GM12878 (cell line): ENCODE measurements at regions of chr2 and their contacts with region 1.

Region 1: DNA sequence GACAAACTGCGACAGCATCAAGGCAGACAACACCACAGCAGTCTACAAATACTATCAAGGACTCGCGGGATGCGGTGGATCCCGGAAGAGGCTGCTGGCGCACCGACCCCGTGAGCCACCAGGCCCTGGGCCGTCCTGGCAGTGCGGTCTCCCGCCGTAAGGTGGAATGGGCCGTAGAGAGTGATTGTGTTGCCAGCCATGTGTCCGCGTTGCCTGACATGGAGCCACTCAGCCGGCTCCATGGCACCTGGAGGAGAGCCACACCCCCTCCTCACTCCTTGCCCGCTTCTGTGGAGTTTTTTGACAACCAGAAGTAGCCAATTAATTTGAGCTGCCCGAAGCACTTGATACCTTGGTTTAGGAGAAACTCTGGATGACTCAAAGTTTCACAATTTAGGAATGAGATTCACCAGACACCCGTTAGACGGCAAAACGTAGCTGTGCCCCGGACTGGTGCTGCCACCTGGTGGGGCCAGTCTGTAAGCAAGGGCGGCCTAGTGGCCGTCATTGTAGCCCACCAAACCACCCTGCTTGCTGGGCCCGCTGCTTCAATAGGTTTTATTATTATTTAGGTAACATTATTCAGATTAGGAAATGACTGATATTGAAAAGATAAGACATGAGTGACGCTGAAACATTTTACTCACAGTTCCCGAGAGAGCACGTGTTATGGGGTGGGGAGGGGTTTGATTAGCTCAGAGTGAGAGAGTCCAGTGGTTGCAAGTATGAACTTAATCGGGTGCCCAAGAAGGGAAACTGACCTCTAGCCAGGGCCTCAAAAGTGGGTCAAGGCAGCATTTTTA is 10.2 kb upstream of the IMP4 start:
- DNase-seq: no peak
- ATAC-seq: peak; percentile 84
- H3K4me3 ChIP-seq: no peak overlapping the region
- H3K27ac ChIP-seq: no peak overlapping the region
- H3K4me1 ChIP-seq: no peaks in the 10 kb centered on the region
- H3K27me3 ChIP-seq: no peaks in the 10 kb centered on the region
- CTCF ChIP-seq: peak; percentile 92 to 97 (median 93)
- EP300 ChIP-seq: no peak
- POLR2A ChIP-seq: no peak
- RAD21 ChIP-seq: peak; percentile 94

Region 2: GRCh38 chr2:130150181-130151144 is 182.0 kb before region 1 on chr2:
- CTCF ChIA-PET with region 1: interaction called, 17 read pairs
- POLR2A ChIA-PET with region 1: no interaction called
- RAD21 ChIA-PET with region 1: interaction called, 12 read pairs
- SMC1A ChIA-PET with region 1: no interaction called
- in situ Hi-C with region 1: loop called (anchors 5 kb)
- intact Hi-C with region 1: no loop called
- DNase-seq: no peak
- ATAC-seq: no peak
- H3K4me3 ChIP-seq: no peak overlapping the region
- H3K27ac ChIP-seq: no peak overlapping the region
- H3K4me1 ChIP-seq: no peaks in the 10 kb centered on the region
- H3K27me3 ChIP-seq: no peaks in the 10 kb centered on the region
- CTCF ChIP-seq: no peak
- EP300 ChIP-seq: no peak
- POLR2A ChIP-seq: no peak
- RAD21 ChIP-seq: no peak

Region 3: GRCh38 chr2:130181325-130181879 is 151.1 kb before region 1 on chr2 and contains the start of gene SMPD4:
- CTCF ChIA-PET with region 1: interaction called, 12 read pairs
- POLR2A ChIA-PET with region 1: interaction called, 3 read pairs
- RAD21 ChIA-PET with region 1: interaction called, 6 read pairs
- SMC1A ChIA-PET with region 1: no interaction called
- in situ Hi-C with region 1: loop called (anchors 5 kb)
- intact Hi-C with region 1: loop called (anchors 1 kb)
- DNase-seq: peak; percentile 80
- ATAC-seq: peak; percentile 83
- H3K4me3 ChIP-seq: peak within 1 kb of the TSS; percentile 75
- H3K27ac ChIP-seq: peak within 1 kb of the TSS; percentile 80
- H3K4me1 ChIP-seq: no peaks in the 10 kb centered on the region; the same call in 1 of the 2 replicates
- H3K27me3 ChIP-seq: no peaks in the 10 kb centered on the region
- CTCF ChIP-seq: no peak
- EP300 ChIP-seq: no peak
- POLR2A ChIP-seq: peak; percentile 69
- RAD21 ChIP-seq: no peak
- polyA plus RNA-seq, gene SMPD4: 5.0 to 10.4 TPM

Region 4: DNA sequence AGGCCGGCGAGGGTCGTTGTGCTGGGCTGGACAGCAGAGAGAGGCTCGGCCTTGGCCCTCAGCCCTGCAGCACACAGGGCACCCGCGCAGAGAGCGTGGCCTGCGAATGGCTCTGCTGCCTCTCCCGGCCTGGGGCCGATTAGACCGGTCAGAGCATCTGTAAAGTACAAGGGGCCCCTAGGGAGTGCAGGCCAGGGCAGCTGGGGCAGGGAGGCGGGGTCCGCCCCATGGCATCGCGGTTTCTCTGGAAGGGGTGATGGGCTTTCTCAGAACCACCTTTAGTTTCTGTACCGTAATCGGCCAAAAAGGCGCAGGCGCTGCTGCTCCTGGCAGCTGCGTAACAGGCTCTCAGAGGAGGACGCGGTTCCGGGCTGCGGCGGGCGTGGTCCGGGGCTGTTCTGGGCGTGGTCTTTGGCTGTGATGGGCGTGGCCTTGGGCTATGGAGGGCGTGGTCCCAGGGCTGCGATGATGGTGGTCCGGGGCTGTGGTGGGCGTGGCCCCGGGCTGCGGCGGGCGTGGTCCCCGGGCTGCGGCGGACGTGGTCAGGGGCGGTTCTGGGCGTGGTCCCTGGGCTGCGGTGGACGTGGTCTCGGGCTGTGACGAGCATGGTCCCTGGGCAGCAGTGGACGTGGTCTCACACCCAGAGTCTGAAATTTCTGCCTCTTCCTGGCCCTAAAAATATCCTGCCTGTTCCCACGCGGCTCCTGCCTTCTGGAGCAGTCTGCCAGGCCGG is 395.0 kb after region 1 on chr2:
- CTCF ChIA-PET with region 1: no interaction called
- POLR2A ChIA-PET with region 1: no interaction called
- RAD21 ChIA-PET with region 1: no interaction called
- SMC1A ChIA-PET with region 1: no interaction called
- in situ Hi-C with region 1: no loop called
- intact Hi-C with region 1: no loop called
- DNase-seq: peak; percentile 48
- ATAC-seq: peak; percentile 96
- H3K4me3 ChIP-seq: peak overlapping the region; percentile 80
- H3K27ac ChIP-seq: peak overlapping the region; percentile 11; the same call in 1 of the 2 replicates
- H3K4me1 ChIP-seq: peaks cover 9% of the 10 kb centered on the region
- H3K27me3 ChIP-seq: no peaks in the 10 kb centered on the region
- CTCF ChIP-seq: 0 out of 6 replicates have a peak, but pooled peaks of 2 of the 3 experiments have one; percentile 1 to 3
- EP300 ChIP-seq: no peak
- POLR2A ChIP-seq: peak; percentile 71
- RAD21 ChIP-seq: no peak

Region 5: GRCh38 chr2:131673392-131674173 is 1341.1 kb after region 1 on chr2:
- CTCF ChIA-PET with region 1: interaction called, 74 read pairs
- POLR2A ChIA-PET with region 1: no interaction called
- RAD21 ChIA-PET with region 1: interaction called, 25 read pairs
- SMC1A ChIA-PET with region 1: interaction called, 20 read pairs
- in situ Hi-C with region 1: loop called (anchors 5 kb)
- intact Hi-C with region 1: loop called (anchors 1 kb)
- DNase-seq: no peak
- ATAC-seq: peak; percentile 97
- H3K4me3 ChIP-seq: peak overlapping the region; percentile 42; the same call in 1 of the 2 replicates
- H3K27ac ChIP-seq: no peak overlapping the region
- H3K4me1 ChIP-seq: peaks cover 19% of the 10 kb centered on the region
- H3K27me3 ChIP-seq: no peaks in the 10 kb centered on the region
- CTCF ChIP-seq: peak; percentile 77 to 88 (median 80)
- EP300 ChIP-seq: no peak
- POLR2A ChIP-seq: no peak
- RAD21 ChIP-seq: peak; percentile 77

Region 6: GRCh38 chr2:131801210-131801744 is 1468.8 kb after region 1 on chr2:
- CTCF ChIA-PET with region 1: interaction called, 3 read pairs
- POLR2A ChIA-PET with region 1: no interaction called
- RAD21 ChIA-PET with region 1: interaction called, 3 read pairs
- SMC1A ChIA-PET with region 1: no interaction called
- in situ Hi-C with region 1: loop called (anchors 25 kb)
- intact Hi-C with region 1: loop called (anchors 2 kb)
- DNase-seq: no peak
- ATAC-seq: no peak
- H3K4me3 ChIP-seq: no peak overlapping the region
- H3K27ac ChIP-seq: no peak overlapping the region
- H3K4me1 ChIP-seq: no peaks in the 10 kb centered on the region
- H3K27me3 ChIP-seq: no peaks in the 10 kb centered on the region; a peak in 1 of 4 replicates
- CTCF ChIP-seq: no peak
- EP300 ChIP-seq: no peak
- POLR2A ChIP-seq: no peak
- RAD21 ChIP-seq: no peak